Sciatic nerve (tissue), 2 donors: ENCODE measurements at regions of chr15 and their contacts with region 1.

Region 1: DNA sequence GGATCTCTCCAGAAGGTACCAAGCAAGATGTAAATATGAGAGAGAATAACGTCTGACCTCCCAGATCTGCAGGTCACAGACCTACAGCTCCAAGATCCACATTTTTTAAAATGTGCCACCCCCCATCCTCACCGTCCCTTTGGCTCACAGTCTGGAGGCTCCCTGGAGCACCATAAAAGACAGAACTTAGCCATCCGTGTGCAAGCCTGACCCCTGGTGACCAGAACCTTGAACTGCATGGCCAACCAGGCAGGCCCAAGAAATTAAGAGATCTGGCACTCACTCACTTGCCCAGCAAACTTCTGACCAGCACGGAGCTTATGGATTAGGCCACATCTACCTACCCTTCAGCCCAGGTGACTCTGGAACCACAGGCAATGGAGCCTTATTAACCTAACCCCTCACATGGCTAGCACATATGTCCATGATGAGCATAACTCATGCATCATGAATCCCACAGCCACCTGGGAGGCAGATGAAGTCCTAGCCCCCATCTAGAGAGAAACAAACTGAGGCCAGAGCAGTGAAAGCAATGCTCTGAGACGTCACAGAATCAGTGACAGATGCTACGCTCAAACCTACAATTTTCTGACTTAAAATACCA is 275.3 kb downstream of the UACA start:
- DNase-seq: peak; percentile 88
- ATAC-seq: peak; percentile 66

Region 2: GRCh38 chr15:68775671-68776476 is 1712.2 kb before region 1 on chr15:
- intact Hi-C with region 1: no loop called
- DNase-seq: peak; percentile 92
- ATAC-seq: peak; percentile 96

Region 3: DNA sequence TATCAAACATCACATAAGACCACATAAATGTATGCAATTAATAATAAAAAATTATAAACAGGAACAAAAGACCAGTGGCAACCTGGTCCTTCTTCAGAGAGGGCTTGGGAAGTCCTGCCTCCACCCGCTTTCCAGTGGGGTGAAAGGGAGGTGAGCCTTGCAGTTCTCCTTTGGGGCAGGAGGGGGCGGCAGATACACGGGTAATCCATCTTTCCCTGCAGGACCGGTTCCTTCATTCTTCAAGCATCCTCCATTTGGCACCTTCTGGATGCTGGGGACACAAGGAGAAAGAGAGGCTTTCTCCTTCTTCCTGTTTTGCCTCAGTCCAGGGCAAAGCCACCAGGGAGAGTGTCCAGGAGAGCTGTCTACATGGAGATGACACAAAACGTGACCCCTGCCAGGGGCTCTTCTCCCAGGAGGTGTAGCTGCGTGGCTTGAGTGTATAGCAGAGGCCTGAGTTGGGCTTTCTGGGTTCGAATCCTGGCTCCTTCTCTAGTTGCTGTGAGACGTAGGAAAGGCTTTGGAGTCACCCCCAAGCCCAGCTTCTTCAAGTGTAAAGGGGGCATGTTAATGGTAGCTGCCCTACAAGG is 1012.2 kb before region 1 on chr15:
- intact Hi-C with region 1: loop called (anchors 10 kb)
- DNase-seq: peak; percentile 93
- ATAC-seq: peak; percentile 90

Region 4: DNA sequence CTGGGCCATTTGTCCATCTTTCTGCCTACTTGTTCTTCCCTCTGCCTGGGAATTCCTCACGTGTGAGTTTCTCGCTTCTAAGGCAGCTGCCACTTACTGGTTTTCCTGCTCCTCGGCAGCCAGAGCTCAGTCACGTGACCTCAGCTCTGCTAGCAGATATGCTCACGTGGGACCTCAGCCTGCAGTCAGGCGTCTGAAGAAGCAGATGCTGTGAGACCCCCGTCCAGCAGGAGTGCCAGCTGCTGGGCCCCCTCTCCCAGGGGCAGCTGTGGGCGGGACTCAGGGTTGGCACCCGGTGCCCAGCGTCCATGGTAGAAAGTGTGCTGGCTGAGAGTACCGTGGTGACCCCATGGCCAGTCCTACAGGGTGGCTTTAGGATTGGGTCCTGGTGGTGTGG is 229.1 kb before region 1 on chr15:
- intact Hi-C with region 1: no loop called
- DNase-seq: peak; percentile 84
- ATAC-seq: peak; percentile 76

Region 5: GRCh38 chr15:70523616-70524015 is 35.5 kb after region 1 on chr15:
- intact Hi-C with region 1: no loop called
- DNase-seq: no peak
- ATAC-seq: no peak